ENCODE measurements at regions of chr1 and their contacts with region 1.

Region 1: DNA sequence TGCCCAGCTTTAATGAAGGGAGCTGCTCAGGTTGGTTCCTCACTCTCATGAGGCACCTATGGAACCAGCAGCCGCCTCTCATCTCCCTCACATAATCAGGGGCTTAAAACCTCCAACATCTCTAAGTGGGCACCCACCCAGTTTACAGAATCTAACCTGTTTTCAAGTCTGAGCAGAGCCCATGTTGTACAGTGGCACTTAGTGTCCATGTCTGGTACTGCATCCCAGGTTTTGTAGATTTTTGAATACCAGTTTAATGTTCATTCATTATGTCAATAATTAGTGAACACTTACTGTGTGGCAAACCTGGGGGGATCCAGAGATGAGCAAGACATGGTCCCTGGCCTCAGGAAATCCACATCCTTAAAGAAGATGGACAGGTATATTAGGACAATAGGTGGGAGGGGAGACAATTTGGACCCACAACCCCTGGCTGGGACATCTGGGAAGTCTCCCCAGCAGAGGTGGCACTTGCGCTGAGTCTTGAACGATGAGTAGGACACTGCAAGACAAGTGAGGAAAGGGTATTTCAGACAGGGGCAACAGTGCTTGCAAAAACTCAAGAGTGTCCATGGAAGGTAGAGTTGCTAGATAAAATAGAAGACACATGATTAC is 83.3 kb downstream of the LACTBL1 start:
- DNase-seq: no peak
- ATAC-seq: peak; percentile 60

Region 2: DNA sequence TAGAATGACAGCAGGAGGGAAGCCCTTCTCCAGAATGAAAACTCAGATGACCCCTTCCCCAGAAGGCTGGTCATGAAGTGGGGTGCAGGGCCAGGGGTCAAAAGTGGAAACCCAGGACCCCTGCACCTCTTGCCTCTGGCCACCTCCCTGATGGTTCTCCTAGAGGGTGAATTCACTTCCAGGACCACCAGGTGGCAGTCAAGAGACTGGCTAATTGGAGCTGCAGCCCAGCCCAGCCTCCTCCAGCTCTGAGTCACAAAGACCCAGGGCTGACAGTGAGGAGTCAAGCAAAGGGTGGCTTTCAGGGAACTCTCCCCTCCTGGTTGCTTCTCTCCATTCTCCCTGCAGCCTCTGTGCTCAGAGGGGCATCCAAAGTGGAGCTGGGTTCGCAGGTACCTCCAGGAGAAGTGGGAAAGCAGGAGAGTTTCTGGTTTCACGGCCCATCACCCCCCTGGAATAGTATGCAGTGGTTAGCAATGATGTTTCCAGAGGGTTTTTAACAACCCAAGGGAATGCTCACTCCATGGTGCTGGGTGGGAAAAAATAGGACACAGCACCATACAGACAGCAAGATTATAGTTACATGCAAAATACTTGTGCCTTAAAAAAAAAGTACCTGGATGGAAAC is 184.8 kb before region 1 on chr1:
- intact Hi-C with region 1: loop called in 1 of 2 experiments (anchors 10 kb)
- DNase-seq: peak; percentile 88 to 89
- ATAC-seq: peak; percentile 58